ENCODE measurements at regions of chr1 and their contacts with region 1.

Region 1: DNA sequence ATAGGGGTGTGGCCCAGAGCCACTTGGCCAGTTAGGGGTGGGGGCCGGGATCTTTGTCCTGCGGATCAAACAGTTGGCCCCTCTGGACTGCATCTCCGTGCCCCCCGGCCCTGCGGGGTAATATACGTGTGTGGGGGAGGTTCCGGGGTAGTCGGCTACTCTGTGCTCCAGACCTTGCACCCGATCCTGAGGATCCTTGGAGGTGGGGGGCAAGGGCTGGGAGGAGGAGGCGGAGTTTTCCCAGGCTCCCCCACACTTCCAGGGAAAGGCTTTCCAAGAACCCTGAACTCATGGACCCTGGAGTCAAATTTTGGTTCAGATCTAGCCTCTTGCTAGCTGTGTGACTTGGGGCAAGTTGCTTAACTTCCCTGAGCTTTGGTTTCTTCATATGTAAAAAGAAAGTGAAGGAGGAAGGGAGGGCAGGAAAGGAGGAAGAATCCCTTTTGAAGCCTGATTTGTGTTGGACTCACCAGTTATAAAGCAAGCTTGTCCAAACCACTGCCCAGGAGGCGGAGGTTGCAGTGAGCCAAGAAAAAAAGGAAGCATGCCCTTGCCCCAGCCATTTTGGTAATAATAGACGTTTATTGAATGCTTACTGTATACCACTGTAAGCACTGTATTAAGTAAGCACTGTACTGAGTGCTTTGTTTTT is 686 bp downstream of the MIIP start:
- DNase-seq: no peak
- H3K4me3 ChIP-seq: peak overlapping the region; percentile 72 to 94 (median 77)
- H3K27ac ChIP-seq: peak overlapping the region; percentile 77; the same call in 1 of the 2 replicates
- H3K4me1 ChIP-seq: peaks cover 0 to 7% (median 0%) of the 10 kb centered on the region in 4 experiments; a peak in 4 of 7 replicates
- H3K27me3 ChIP-seq: no peaks in the 10 kb centered on the region
- CTCF ChIP-seq: no peak
- EP300 ChIP-seq: no peak
- POLR2A ChIP-seq: no peak
- RAD21 ChIP-seq: no peak

Region 2: DNA sequence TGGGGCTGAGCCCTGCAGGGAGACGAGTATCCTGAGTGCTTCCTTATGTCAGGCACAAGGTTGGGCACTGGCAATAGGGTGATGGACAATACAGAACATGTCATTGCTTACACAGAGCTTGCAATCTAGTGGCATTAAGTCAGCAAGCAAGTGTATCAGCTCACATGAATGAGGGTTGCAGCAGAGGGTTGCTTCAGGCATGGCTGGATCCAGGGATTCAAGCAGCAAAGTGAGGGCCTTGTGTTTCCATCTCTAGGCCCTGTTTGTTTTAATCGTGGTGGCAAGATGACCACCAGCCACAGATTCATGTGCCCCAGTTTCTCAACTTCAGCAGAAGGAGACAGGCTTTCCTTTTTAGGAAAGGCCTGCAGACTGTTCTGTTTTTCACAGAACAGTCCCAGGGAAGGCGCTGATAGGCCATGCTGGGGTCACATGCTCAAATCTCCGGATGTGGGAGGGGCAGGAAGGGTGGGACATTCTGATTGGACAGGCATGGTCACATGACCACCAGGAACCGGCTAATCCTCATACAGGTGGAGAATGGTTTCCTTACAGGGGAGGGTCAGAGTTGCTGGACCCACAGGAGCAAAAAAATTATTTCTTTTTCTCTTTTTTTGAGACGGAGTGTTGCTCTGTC is 71.0 kb before region 1 on chr1:
- CTCF ChIA-PET with region 1: no interaction called
- POLR2A ChIA-PET with region 1: no interaction called
- DNase-seq: no peak
- H3K4me3 ChIP-seq: no peak overlapping the region
- H3K27ac ChIP-seq: no peak overlapping the region
- H3K4me1 ChIP-seq: peaks cover under 1 to 9% (median 3%) of the 10 kb centered on the region in 4 experiments; a peak in 6 of 7 replicates
- H3K27me3 ChIP-seq: no peaks in the 10 kb centered on the region
- CTCF ChIP-seq: no peak
- EP300 ChIP-seq: no peak
- POLR2A ChIP-seq: no peak
- RAD21 ChIP-seq: no peak

Region 3: DNA sequence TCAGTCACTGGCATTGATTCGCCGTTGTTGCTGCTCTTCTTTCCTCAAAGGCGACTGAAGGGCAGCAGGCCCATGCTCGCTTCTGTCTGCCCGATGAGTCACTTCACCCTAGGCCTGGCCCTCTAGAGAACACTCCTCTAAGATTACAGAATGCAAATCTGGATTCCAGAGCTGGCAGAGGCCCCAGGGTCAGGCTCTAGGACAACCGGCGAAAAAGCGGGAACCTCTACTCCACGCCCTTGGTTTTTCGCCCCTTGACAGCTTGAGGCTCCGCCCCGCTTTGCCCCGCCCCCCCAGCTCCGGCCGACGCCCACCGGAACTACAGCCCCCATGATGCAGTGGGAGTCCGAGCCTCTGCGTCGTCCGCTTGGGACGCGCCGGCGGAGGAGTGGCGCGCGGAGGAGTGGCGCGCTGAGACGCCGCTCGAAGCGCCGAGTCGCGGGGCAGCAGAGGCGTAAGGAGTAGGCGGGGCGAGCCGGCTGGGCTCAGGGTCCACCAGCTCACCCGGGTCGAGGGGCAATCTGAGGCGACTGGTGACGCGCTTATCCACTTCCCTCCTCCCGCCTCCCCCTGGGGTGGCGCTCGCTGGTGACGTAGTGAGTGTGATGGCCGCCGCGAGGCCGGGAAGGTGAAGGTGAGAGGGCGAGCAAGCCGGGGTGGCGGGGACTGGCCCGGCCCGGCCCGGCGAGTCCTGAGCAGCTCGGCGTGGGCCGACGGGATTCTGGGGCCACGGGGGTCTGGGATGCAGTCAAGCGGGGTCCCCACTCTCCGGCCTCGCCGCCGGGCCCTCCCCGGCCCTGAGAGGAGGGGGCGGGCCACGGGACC is 39.9 kb before region 1 on chr1 and contains the start of gene MFN2:
- CTCF ChIA-PET with region 1: interaction called, 3 read pairs
- POLR2A ChIA-PET with region 1: interaction called, 21 read pairs
- DNase-seq: peak; percentile 97
- H3K4me3 ChIP-seq: peak within 1 kb of the TSS; percentile 78 to 94 (median 84)
- H3K27ac ChIP-seq: peak within 1 kb of the TSS; percentile 96
- H3K4me1 ChIP-seq: peaks cover 0 to 5% (median 2%) of the 10 kb centered on the region in 4 experiments; a peak in 3 of 7 replicates
- H3K27me3 ChIP-seq: no peaks in the 10 kb centered on the region
- CTCF ChIP-seq: no peak
- EP300 ChIP-seq: 0 out of 3 replicates have a peak, but pooled peaks of 1 of the 2 experiments have one; percentile 6
- POLR2A ChIP-seq: peak; percentile 91 to 95
- RAD21 ChIP-seq: no peak
- total RNA-seq, gene MFN2: 58.2 and 62.5 TPM in 2 replicates

Region 4: DNA sequence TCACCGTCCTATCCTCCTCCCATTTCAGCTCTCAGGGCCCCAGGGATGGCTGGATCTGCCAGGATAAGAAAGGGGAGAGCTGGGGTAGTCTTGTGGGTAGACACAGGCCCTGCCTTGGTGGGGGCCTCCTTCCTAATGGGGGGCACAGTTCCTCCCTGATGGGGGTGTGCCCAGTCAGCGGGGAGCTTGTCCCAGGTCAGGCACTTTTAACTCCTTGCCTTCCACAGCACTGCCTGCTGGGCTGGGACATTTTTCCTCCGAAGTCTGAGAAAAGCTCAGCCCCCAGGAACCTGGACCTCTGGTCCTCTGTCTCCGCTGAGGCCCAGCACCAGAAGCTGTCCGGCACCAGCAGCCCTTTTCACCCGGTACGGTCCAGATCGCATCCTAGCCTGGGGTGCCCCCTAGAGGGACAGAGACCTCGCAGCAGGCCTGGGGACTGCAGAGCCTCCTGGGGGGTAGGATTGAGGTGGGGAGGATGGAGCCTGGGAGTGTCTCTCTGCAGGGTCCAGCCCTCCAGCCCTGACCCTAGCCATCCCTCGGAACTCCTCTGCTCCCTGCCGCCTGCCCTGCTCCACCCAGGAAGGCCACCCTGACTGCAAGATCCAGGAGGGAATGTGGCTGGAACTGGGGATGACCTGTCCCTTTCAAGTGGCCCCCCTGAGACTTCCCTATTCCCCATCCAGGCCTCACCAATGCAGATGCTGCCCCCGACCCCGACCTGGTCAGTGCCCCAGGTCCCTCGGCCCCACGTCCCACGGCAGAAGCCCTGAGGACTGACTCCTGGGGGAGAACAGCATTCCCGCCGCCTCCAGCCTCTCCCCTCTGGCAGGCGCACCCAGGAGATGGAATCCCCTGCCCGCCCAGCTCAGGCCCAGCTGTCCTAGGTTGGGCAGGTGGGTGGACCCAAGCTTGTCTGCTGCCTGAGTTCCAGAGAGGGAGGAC is 11.3 kb after region 1 on chr1:
- CTCF ChIA-PET with region 1: interaction called, 16 read pairs
- POLR2A ChIA-PET with region 1: interaction called, 66 read pairs
- DNase-seq: peak in 1 of 2 experiments; percentile 73
- H3K4me3 ChIP-seq: no peak overlapping the region
- H3K27ac ChIP-seq: no peak overlapping the region
- H3K4me1 ChIP-seq: no peaks in the 10 kb centered on the region; a peak in 1 of 7 replicates
- H3K27me3 ChIP-seq: no peaks in the 10 kb centered on the region
- CTCF ChIP-seq: peak; percentile 68 to 73 (median 69)
- EP300 ChIP-seq: no peak
- POLR2A ChIP-seq: no peak
- RAD21 ChIP-seq: peak; percentile 67 to 73

Region 5: GRCh38 chr1:12196641-12197482 is 176.9 kb after region 1 on chr1:
- CTCF ChIA-PET with region 1: no interaction called
- POLR2A ChIA-PET with region 1: no interaction called
- DNase-seq: no peak
- H3K4me3 ChIP-seq: no peak overlapping the region
- H3K27ac ChIP-seq: no peak overlapping the region
- H3K4me1 ChIP-seq: peaks cover 0 to 5% (median 2%) of the 10 kb centered on the region in 4 experiments; a peak in 2 of 7 replicates
- H3K27me3 ChIP-seq: no peaks in the 10 kb centered on the region
- CTCF ChIP-seq: peak; percentile 62 to 73 (median 65)
- EP300 ChIP-seq: no peak
- POLR2A ChIP-seq: no peak
- RAD21 ChIP-seq: peak; percentile 41 to 62; a peak in 3 of 4 replicates